ENCODE measurements at regions of chr20 and their contacts with region 1.

Region 1: GRCh38 chr20:60837173-60837770 is 414.8 kb upstream of the CDH4 start:
- DNase-seq: no peak
- H3K4me3 Mint-ChIP-seq: no peak overlapping the region
- H3K27ac Mint-ChIP-seq: no peak overlapping the region
- H3K4me1 Mint-ChIP-seq: peaks cover 4% of the 10 kb centered on the region
- H3K27me3 Mint-ChIP-seq: peaks cover 85% of the 10 kb centered on the region
- CTCF ChIP-seq: no peak

Region 2: DNA sequence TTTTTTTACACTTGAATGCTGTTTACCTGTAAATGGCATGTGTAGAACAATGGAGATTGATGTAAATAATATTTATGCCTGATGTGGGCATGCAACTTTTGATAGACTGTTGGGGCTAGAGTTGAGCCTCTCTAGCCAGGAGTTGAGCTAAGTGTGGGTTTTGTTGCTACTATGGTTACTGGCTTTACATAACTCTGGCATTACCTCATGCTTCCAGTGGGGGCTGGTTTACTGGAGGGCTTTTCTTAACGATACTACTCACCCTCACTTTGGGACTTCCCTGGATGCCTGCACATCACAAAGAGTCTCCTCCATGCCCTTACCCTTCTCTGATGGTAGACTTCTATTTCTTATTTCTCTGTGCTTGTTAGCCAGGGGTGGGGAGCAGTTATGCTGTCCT is 109.9 kb before region 1 on chr20:
- CTCF ChIA-PET with region 1: interaction called, 3 read pairs
- POLR2A ChIA-PET with region 1: no interaction called
- intact Hi-C with region 1: loop called (anchors 10 kb)
- DNase-seq: no peak
- H3K4me3 Mint-ChIP-seq: no peak overlapping the region
- H3K27ac Mint-ChIP-seq: no peak overlapping the region
- H3K4me1 Mint-ChIP-seq: no peaks in the 10 kb centered on the region
- H3K27me3 Mint-ChIP-seq: peaks cover 43% of the 10 kb centered on the region
- CTCF ChIP-seq: no peak

Region 3: GRCh38 chr20:61683721-61684120 is 846.4 kb after region 1 on chr20:
- CTCF ChIA-PET with region 1: no interaction called
- POLR2A ChIA-PET with region 1: no interaction called
- intact Hi-C with region 1: no loop called
- DNase-seq: no peak
- H3K4me3 Mint-ChIP-seq: no peak overlapping the region
- H3K27ac Mint-ChIP-seq: no peak overlapping the region
- H3K4me1 Mint-ChIP-seq: peaks cover 25% of the 10 kb centered on the region
- H3K27me3 Mint-ChIP-seq: no peaks in the 10 kb centered on the region
- CTCF ChIP-seq: no peak